CD4-positive, alpha-beta memory T cell (primary cell): ENCODE measurements at regions of chr10 and their contacts with region 1.

Region 1: GRCh38 chr10:124647421-124648130 is 96.6 kb downstream of the FAM53B start:
- DNase-seq: peak; percentile 75 to 85 (median 78)
- H3K4me3 ChIP-seq: peak overlapping the region; percentile 26 to 34
- H3K4me3 Mint-ChIP-seq: peak overlapping the region; percentile 41 to 88 (median 80)
- H3K27ac ChIP-seq: peak overlapping the region; percentile 79
- H3K27ac Mint-ChIP-seq: peak overlapping the region; percentile 92 to 99 (median 96)
- H3K4me1 ChIP-seq: peaks cover 95% of the 10 kb centered on the region
- H3K4me1 Mint-ChIP-seq: peaks cover 69 to 100% (median 90%) of the 10 kb centered on the region in 4 donors
- H3K27me3 ChIP-seq: no peaks in the 10 kb centered on the region
- H3K27me3 Mint-ChIP-seq: no peaks in the 10 kb centered on the region

Region 2: GRCh38 chr10:124626759-124627380 is 20.7 kb before region 1 on chr10:
- CTCF ChIA-PET with region 1: interaction called, 15 read pairs
- POLR2A ChIA-PET with region 1: interaction called, 29 read pairs
- intact Hi-C with region 1: no loop called
- DNase-seq: peak; percentile 46 to 60 (median 55)
- H3K4me3 ChIP-seq: peak overlapping the region; percentile 11 to 14
- H3K4me3 Mint-ChIP-seq: peak overlapping the region in 7 of 8 donors; percentile 36 to 76 (median 69)
- H3K27ac ChIP-seq: peak overlapping the region; percentile 49
- H3K27ac Mint-ChIP-seq: peak overlapping the region; percentile 82 to 96 (median 89)
- H3K4me1 ChIP-seq: peaks cover 68% of the 10 kb centered on the region
- H3K4me1 Mint-ChIP-seq: peaks cover 34 to 81% (median 50%) of the 10 kb centered on the region in 4 donors
- H3K27me3 ChIP-seq: no peaks in the 10 kb centered on the region
- H3K27me3 Mint-ChIP-seq: no peaks in the 10 kb centered on the region

Region 3: DNA sequence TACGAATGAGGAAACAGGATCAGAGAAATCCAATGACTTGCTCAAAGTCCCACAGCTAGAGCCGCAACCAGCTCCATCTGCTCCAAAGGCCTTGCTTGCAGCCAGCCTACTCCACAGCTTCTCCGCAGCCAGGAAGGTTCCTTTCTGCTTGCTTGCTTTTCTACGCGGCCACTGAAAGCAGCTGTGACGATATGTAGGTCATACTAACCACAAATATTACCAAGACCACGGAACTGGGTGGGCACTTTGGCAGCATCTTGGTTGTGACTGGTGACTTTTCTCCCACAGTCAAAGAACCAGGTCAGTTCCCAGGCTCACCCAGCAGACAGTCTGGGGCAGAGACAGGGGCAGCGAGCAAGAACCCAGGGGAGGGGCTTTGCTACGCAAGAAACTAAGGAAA is 10.2 kb after region 1 on chr10:
- CTCF ChIA-PET with region 1: interaction called, 77 read pairs
- POLR2A ChIA-PET with region 1: interaction called, 439 read pairs
- intact Hi-C with region 1: loop called (anchors 1 kb)
- DNase-seq: peak; percentile 60 to 79 (median 77)
- H3K4me3 ChIP-seq: peak overlapping the region; percentile 13 to 36
- H3K4me3 Mint-ChIP-seq: peak overlapping the region; percentile 31 to 87 (median 78)
- H3K27ac ChIP-seq: peak overlapping the region; percentile 67
- H3K27ac Mint-ChIP-seq: peak overlapping the region; percentile 88 to 98 (median 95)
- H3K4me1 ChIP-seq: peaks cover 92% of the 10 kb centered on the region
- H3K4me1 Mint-ChIP-seq: peaks cover 68 to 97% (median 84%) of the 10 kb centered on the region in 4 donors
- H3K27me3 ChIP-seq: no peaks in the 10 kb centered on the region
- H3K27me3 Mint-ChIP-seq: no peaks in the 10 kb centered on the region

Region 4: GRCh38 chr10:124671486-124672075 is 24.0 kb after region 1 on chr10:
- CTCF ChIA-PET with region 1: interaction called, 59 read pairs
- POLR2A ChIA-PET with region 1: interaction called, 439 read pairs
- intact Hi-C with region 1: loop called (anchors 2 kb)
- DNase-seq: peak in 1 of 5 donors; percentile 33
- H3K4me3 ChIP-seq: no peak overlapping the region
- H3K4me3 Mint-ChIP-seq: peak overlapping the region in 7 of 8 donors; percentile 53 to 84 (median 67)
- H3K27ac ChIP-seq: peak overlapping the region; percentile 43
- H3K27ac Mint-ChIP-seq: peak overlapping the region; percentile 83 to 96 (median 90)
- H3K4me1 ChIP-seq: peaks cover 100% of the 10 kb centered on the region
- H3K4me1 Mint-ChIP-seq: peaks cover 68 to 99% (median 88%) of the 10 kb centered on the region in 4 donors
- H3K27me3 ChIP-seq: no peaks in the 10 kb centered on the region
- H3K27me3 Mint-ChIP-seq: no peaks in the 10 kb centered on the region

Region 5: DNA sequence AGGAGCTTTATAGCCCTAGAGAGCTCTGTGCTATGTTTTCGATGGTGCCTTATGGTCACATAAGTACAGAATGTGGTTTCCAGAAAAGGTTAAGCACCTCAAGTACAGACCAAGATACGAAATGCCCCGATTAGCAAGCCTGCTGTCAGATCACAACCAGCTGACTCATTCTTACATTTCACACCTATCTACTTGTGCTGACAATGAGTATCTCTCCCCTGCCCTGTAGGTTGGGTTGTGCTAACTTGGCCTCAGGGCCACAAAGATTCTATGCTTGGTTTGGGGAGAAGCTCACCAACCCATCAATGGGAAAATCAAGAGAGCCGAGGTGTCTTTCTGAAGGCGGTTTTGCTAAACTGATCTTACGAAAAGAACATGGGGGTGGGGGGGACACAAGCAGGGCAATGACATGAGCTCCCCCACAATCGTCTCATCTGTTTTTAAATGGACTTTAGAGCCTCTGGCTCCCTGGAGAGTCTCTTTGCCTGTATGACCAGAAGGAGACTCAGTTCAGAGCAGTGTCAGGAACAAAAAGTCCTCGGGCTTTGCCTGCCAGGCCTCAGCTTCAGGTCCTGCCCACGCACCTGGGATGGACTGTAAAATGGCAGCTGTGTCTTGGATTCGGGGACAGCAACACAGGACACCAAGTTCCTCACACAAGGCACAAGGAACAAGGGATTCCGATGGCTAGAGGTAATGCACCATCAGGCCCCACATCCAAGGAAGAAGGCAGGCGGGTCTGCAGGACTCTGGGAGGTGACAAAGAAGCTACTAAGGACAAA is 41.5 kb after region 1 on chr10:
- CTCF ChIA-PET with region 1: interaction called, 70 read pairs
- POLR2A ChIA-PET with region 1: interaction called, 85 read pairs
- intact Hi-C with region 1: no loop called
- DNase-seq: peak; percentile 50 to 81 (median 52)
- H3K4me3 ChIP-seq: no peak overlapping the region
- H3K4me3 Mint-ChIP-seq: peak overlapping the region in 7 of 8 donors; percentile 9 to 88 (median 76)
- H3K27ac ChIP-seq: peak overlapping the region; percentile 42
- H3K27ac Mint-ChIP-seq: peak overlapping the region; percentile 87 to 98 (median 91)
- H3K4me1 ChIP-seq: peaks cover 95% of the 10 kb centered on the region
- H3K4me1 Mint-ChIP-seq: peaks cover 59 to 94% (median 79%) of the 10 kb centered on the region in 4 donors
- H3K27me3 ChIP-seq: no peaks in the 10 kb centered on the region
- H3K27me3 Mint-ChIP-seq: no peaks in the 10 kb centered on the region

Region 6: GRCh38 chr10:124708922-124709520 is 61.4 kb after region 1 on chr10:
- CTCF ChIA-PET with region 1: interaction called, 200 read pairs
- POLR2A ChIA-PET with region 1: interaction called, 297 read pairs
- intact Hi-C with region 1: no loop called
- DNase-seq: peak in 1 of 5 donors; percentile 53
- H3K4me3 ChIP-seq: no peak overlapping the region
- H3K4me3 Mint-ChIP-seq: peak overlapping the region in 7 of 8 donors; percentile 40 to 77 (median 57)
- H3K27ac ChIP-seq: peak overlapping the region; percentile 90
- H3K27ac Mint-ChIP-seq: peak overlapping the region; percentile 90 to 97 (median 95)
- H3K4me1 ChIP-seq: peaks cover 97% of the 10 kb centered on the region
- H3K4me1 Mint-ChIP-seq: peaks cover 78 to 93% (median 86%) of the 10 kb centered on the region in 4 donors
- H3K27me3 ChIP-seq: no peaks in the 10 kb centered on the region
- H3K27me3 Mint-ChIP-seq: no peaks in the 10 kb centered on the region